Aorta (tissue), 5 donors: ENCODE measurements at regions of chr15 and their contacts with region 1.

Region 1: GRCh38 chr15:78811124-78811824 is at the start of gene ADAMTS7:
- DNase-seq: peak; percentile 78 to 93
- ATAC-seq: peak; percentile 92
- H3K4me3 ChIP-seq: peak within 1 kb of the TSS; percentile 57 to 91
- H3K27ac ChIP-seq: peak within 1 kb of the TSS; percentile 29 to 53
- H3K4me1 ChIP-seq: no peaks in the 10 kb centered on the region
- H3K27me3 ChIP-seq: no peaks in the 10 kb centered on the region
- total RNA-seq, gene ADAMTS7: 14.7 to 23.9 TPM

Region 2: GRCh38 chr15:78761891-78762385 is 49.3 kb before region 1 on chr15:
- intact Hi-C with region 1: loop called in 1 of 2 experiments (anchors 5 kb)
- DNase-seq: peak; percentile 35 to 71
- ATAC-seq: no peak
- H3K4me3 ChIP-seq: no peak overlapping the region
- H3K27ac ChIP-seq: no peak overlapping the region
- H3K4me1 ChIP-seq: no peaks in the 10 kb centered on the region
- H3K27me3 ChIP-seq: no peaks in the 10 kb centered on the region

Region 3: GRCh38 chr15:78859971-78860732 is 48.9 kb after region 1 on chr15:
- intact Hi-C with region 1: loop called (anchors 1 to 5 kb)
- DNase-seq: peak; percentile 81 to 91
- ATAC-seq: peak; percentile 88
- H3K4me3 ChIP-seq: peak overlapping the region in 1 of 2 donors; percentile 48
- H3K27ac ChIP-seq: peak overlapping the region; percentile 62 to 75
- H3K4me1 ChIP-seq: no peaks in the 10 kb centered on the region
- H3K27me3 ChIP-seq: no peaks in the 10 kb centered on the region

Region 4: DNA sequence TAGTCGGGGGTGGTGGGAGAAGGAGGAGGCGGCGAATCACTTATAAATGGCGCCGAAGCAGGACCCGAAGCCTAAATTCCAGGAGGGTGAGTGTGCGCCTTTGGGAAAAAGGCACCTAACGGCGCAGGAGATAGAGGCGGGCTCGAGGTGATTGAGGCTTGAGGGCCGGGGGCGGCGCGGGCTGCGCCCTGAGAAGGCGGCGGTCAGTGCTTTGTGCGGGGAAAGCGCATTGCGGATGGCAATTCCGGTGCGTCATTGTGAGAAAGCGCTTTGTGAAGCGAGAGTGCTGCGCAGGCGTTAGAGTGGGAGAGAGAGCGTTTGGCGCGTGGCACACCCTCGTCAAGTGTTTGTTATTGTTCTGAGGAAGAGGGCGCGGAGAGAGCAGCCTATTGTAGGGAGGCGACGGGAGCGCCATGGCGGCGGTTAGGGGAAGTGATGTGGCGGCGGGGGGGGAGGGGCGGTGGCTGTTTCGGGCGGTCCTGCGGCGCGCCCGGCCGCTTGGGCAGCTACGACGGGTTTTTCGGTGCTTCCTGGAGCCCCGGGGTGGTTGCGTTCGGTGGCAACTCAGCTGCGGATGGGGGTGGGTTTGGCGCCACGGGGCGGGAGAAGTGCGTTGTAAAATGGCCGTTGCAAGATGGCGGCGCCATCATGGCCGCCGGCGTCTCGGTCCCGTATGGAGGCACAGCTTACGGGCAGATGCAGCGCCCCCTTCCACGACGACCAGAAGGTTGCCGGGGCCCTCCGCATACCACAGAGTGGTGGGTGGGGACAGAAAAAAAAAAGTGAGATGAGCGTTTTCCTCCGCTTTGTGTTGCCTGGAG is 61.9 kb after region 1 on chr15:
- intact Hi-C with region 1: loop called in 1 of 2 experiments (anchors 5 kb)
- DNase-seq: peak; percentile 88 to 93
- ATAC-seq: peak; percentile 90
- H3K4me3 ChIP-seq: peak overlapping the region; percentile 61 to 94
- H3K27ac ChIP-seq: peak overlapping the region; percentile 97 to 99
- H3K4me1 ChIP-seq: peaks cover 0 to 3% of the 10 kb centered on the region in 2 donors
- H3K27me3 ChIP-seq: no peaks in the 10 kb centered on the region

Region 5: DNA sequence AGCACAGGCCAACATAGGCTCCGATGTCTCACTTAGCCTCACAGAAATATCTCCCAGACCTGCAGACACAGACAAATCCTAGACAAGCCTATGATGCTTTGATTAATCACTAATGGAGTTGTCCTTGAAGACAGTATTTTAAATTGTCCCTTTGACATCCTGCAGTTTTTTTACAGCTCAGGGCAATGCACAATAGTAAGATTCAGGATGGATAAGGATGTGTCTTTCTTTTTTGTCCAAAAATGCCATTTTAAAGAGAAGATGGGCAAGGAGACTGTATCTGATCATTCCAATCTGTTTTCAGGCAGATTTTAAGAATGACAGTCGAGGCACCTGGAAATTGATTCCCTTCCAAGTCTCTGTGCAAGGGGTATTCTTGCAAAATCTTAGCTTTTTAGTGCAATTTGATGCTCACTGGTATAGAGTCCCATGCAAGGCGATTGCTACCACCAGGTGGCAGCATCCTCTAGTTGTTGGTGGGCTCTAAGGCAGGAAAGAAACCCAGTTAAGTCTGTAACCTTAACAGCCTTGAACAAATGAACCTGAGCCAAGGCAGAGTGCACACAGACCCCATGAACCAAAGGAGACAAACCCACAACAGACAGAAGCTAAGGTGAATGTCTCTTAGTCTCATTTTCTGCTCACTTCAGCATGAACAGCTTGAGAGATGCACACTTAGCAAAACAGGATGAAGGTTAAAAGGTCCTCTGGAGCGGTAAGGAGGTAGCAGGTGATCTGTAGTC is 569.7 kb after region 1 on chr15:
- intact Hi-C with region 1: no loop called
- DNase-seq: peak; percentile 83 to 91
- ATAC-seq: peak; percentile 83
- H3K4me3 ChIP-seq: no peak overlapping the region
- H3K27ac ChIP-seq: no peak overlapping the region
- H3K4me1 ChIP-seq: no peaks in the 10 kb centered on the region
- H3K27me3 ChIP-seq: no peaks in the 10 kb centered on the region